AG04449 (cell line): ENCODE measurements at regions of chrX and their contacts with region 1.

Region 1: GRCh38 chrX:107716816-107717700 is 58.5 kb downstream of the TSC22D3 start:
- DNase-seq: no peak
- H3K4me3 ChIP-seq: peak overlapping the region; percentile 64
- CTCF ChIP-seq: no peak

Region 2: DNA sequence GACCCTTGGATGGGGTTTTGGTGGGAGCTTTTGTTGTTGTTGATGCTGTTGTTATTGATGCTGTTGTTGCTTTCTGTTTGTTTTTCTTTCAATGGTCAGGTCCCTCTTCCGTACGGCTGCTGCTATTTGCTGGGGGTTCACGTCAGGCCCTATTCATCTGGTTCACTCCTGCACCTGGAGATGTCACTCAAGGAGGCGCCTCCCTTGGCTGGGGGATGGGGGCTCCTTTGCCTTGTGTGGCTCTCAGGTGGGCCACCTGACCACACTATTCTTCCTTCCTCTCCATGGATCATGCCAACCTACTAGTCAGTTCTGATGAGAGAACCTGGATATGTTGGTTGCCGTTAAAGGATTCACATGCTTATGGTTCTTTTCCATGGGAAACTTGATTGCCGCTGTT is 127.8 kb before region 1 on chrX:
- CTCF ChIA-PET with region 1: no interaction called
- POLR2A ChIA-PET with region 1: no interaction called
- DNase-seq: no peak
- H3K4me3 ChIP-seq: no peak overlapping the region
- CTCF ChIP-seq: no peak

Region 3: GRCh38 chrX:107729547-107730297 is 12.7 kb after region 1 on chrX:
- CTCF ChIA-PET with region 1: interaction called, 10 read pairs
- POLR2A ChIA-PET with region 1: interaction called, 6 read pairs
- DNase-seq: no peak
- H3K4me3 ChIP-seq: no peak overlapping the region
- CTCF ChIP-seq: no peak

Region 4: DNA sequence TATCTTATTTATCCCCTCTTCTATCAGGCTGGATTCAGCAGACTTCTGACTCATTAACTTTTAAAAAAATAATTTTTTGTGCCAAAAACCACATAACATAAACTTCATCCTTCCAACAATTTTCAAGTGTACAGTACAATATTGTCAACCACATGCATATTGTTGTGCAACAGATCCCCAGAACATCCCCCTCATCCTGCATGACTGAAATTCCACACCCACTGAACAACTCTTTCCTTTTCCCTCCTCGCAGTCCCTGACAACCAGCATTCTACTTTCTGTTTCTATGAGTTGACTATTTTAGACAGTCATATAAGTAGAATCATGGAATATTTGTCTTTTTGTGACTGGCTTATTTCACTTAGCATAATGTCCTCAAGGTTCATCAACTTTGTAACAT is 106.4 kb after region 1 on chrX:
- CTCF ChIA-PET with region 1: no interaction called
- POLR2A ChIA-PET with region 1: no interaction called
- DNase-seq: peak; percentile 46
- H3K4me3 ChIP-seq: no peak overlapping the region
- CTCF ChIP-seq: no peak

Region 5: GRCh38 chrX:107935664-107936433 is 218.8 kb after region 1 on chrX:
- CTCF ChIA-PET with region 1: no interaction called
- POLR2A ChIA-PET with region 1: no interaction called
- DNase-seq: no peak
- H3K4me3 ChIP-seq: peak overlapping the region; percentile 41
- CTCF ChIP-seq: no peak

Region 6: GRCh38 chrX:107968623-107969022 is 251.6 kb after region 1 on chrX:
- CTCF ChIA-PET with region 1: no interaction called
- POLR2A ChIA-PET with region 1: no interaction called
- DNase-seq: no peak
- H3K4me3 ChIP-seq: no peak overlapping the region
- CTCF ChIP-seq: no peak